Activated CD8-positive, alpha-beta memory T cell treated with anti-CD3 and anti-CD28 coated beads, Interleukin-2, amount 10 ng/mL, durations not matched to agents 7 days and 5 days (primary cell): ENCODE measurements at regions of chr18 and their contacts with region 1.

Region 1: DNA sequence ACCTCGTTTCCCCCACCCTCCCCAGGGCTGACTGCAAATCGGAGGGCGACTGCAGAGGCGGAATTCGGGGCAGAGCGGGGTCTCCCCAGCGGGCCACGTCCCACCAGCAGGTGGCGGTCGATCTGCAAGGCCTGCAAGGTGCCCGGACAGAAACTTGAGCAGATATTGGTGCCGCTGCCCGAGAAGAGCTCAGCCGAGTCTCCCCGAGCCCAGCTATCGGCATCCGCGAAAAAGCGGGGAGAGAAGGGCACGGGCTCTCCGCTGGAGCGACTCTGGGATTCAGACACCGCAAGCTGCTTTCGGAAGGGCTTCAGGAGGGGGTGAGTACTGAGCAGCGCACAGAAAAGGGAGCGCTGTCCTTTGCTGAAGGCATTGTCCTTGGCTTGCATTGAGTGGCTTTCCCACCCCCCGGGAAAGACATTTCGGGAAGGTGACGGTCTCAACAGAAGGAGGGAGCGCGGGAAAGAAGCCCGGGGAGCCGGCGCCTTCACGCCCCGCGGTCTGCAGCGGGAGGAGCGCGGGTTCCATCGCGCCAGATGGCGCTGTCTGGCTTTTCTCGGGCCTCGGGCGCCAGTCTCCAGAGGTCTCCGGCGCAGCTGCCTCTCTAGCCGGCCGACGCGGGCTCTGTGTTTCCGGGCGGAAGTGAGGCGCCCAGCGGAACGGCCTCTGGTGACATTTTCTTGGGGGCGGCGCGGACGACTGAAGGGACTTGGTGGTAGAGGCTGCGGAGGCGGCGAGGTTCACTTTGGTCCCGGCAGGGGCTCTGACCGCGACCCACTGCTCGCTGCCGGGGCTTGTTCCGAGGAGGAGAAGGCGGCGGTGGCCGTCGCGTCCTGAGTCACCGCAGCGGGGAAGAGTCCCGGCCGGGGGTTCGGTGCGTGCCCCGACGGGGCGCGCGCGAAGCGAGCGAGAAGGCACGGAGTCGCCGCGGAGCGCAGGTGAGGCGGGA is 69.5 kb downstream of the HAUS1 start:
- DNase-seq: peak; percentile 96
- ATAC-seq: peak; percentile 91
- H3K4me3 Mint-ChIP-seq: peak overlapping the region; percentile 94
- H3K27ac Mint-ChIP-seq: peak overlapping the region; percentile 99
- H3K4me1 Mint-ChIP-seq: peaks cover 46% of the 10 kb centered on the region
- H3K27me3 Mint-ChIP-seq: peaks cover 3% of the 10 kb centered on the region

Region 2: GRCh38 chr18:46080156-46080555 is 93.5 kb before region 1 on chr18:
- CTCF ChIA-PET with region 1: no interaction called
- DNase-seq: no peak
- ATAC-seq: no peak
- H3K4me3 Mint-ChIP-seq: no peak overlapping the region
- H3K27ac Mint-ChIP-seq: no peak overlapping the region
- H3K4me1 Mint-ChIP-seq: no peaks in the 10 kb centered on the region
- H3K27me3 Mint-ChIP-seq: no peaks in the 10 kb centered on the region

Region 3: DNA sequence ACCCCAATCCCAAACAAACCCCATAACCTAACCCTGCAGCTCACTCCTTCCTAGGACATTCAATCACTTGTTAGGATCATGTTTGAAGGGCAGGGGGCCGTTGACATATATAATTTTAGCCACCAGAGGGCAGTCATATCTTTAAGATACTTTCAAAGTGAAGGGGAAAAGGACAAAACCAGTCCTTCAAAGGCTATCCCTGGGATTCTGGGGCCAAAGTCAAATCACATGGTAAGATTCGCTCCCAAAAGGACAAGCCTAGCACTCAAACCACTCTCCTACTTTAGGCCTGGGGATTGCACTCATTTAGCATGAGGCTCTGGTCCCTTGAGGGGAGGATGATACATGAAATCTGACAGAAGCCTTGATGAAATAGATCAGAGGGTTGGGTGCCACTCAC is 24.9 kb before region 1 on chr18:
- CTCF ChIA-PET with region 1: interaction called, 88 read pairs
- DNase-seq: peak; percentile 69
- ATAC-seq: peak; percentile 53
- H3K4me3 Mint-ChIP-seq: no peak overlapping the region
- H3K27ac Mint-ChIP-seq: no peak overlapping the region
- H3K4me1 Mint-ChIP-seq: peaks cover 28% of the 10 kb centered on the region
- H3K27me3 Mint-ChIP-seq: peaks cover 16% of the 10 kb centered on the region

Region 4: DNA sequence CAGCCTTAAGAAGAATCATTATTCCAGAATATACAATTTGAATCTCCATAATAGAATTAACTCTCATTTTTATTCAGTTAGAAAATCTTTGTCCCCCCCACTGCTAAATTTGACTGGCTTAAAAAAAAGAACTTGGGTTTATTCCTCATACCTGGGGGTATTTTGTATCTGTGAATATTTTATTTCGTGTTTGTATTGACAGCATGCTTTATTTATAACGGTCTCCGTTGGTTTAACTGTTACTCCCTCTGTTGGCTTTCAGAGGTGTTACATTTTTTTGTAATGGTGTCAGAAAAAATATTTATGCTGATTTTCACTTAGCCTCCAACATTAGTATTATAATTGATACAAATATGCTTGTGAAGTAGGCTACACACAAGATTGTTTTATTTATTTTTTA is 39.6 kb after region 1 on chr18:
- CTCF ChIA-PET with region 1: interaction called, 35 read pairs
- DNase-seq: no peak
- ATAC-seq: no peak
- H3K4me3 Mint-ChIP-seq: no peak overlapping the region
- H3K27ac Mint-ChIP-seq: no peak overlapping the region
- H3K4me1 Mint-ChIP-seq: peaks cover 59% of the 10 kb centered on the region
- H3K27me3 Mint-ChIP-seq: no peaks in the 10 kb centered on the region

Region 5: GRCh38 chr18:46250084-46250811 is 76.6 kb after region 1 on chr18:
- CTCF ChIA-PET with region 1: interaction called, 62 read pairs
- DNase-seq: peak; percentile 81
- ATAC-seq: peak; percentile 95
- H3K4me3 Mint-ChIP-seq: peak overlapping the region; percentile 75
- H3K27ac Mint-ChIP-seq: peak overlapping the region; percentile 97
- H3K4me1 Mint-ChIP-seq: peaks cover 56% of the 10 kb centered on the region
- H3K27me3 Mint-ChIP-seq: no peaks in the 10 kb centered on the region

Region 6: GRCh38 chr18:46273829-46274228 is 100.2 kb after region 1 on chr18:
- CTCF ChIA-PET with region 1: interaction called, 15 read pairs
- DNase-seq: no peak
- ATAC-seq: no peak
- H3K4me3 Mint-ChIP-seq: no peak overlapping the region
- H3K27ac Mint-ChIP-seq: no peak overlapping the region
- H3K4me1 Mint-ChIP-seq: peaks cover 35% of the 10 kb centered on the region
- H3K27me3 Mint-ChIP-seq: no peaks in the 10 kb centered on the region

Region 7: DNA sequence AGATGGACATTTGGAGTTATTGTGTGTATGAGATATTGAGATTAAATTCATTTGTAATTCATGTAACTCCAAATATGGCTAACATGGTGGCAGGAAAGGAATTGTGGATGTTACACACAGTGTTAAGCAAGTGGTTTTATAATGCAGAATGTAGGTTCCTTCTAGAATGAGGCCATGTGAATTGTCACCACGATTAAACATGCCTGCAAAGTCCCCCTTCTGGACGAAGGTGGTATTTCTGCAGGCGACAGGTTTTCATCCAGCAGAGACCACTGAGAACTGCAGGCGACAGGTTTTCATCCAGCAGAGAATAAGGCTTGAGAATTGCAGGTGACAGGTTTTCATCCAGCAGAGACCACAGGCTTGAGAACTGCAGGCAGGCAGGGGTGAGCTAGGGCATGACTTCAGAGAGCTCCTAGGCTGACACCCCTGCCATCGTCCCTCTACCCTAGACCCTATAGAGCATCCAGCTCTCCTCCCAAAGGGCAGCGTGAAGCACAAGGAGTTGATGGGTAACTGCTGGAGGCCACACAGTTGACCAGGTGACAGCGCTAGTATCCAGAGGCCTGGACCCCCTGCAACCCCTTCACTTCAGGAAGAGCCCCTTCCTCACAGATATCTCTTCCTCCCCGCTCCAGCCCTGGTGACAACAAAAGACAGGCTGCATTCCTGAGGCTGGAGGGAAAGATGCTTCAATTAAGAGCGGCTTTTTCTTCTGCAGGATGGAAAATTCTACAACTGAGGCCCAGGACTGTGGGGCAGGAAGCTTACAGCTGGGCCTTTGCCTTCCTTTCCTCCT is 307.6 kb after region 1 on chr18:
- CTCF ChIA-PET with region 1: interaction called, 10 read pairs
- DNase-seq: peak; percentile 67
- ATAC-seq: no peak
- H3K4me3 Mint-ChIP-seq: no peak overlapping the region
- H3K27ac Mint-ChIP-seq: no peak overlapping the region
- H3K4me1 Mint-ChIP-seq: no peaks in the 10 kb centered on the region
- H3K27me3 Mint-ChIP-seq: peaks cover 7% of the 10 kb centered on the region